PC-3 (cell line): ENCODE measurements at regions of chr18 and their contacts with region 1.

Region 1: GRCh38 chr18:54607215-54607934 is 16.3 kb downstream of the DYNAP start:
- DNase-seq: peak; percentile 87
- ATAC-seq: peak; percentile 65
- H3K4me3 ChIP-seq: peak overlapping the region; percentile 65
- H3K27ac ChIP-seq: peak overlapping the region; percentile 95
- H3K4me1 ChIP-seq: peaks cover 38% of the 10 kb centered on the region
- H3K27me3 ChIP-seq: no peaks in the 10 kb centered on the region
- CTCF ChIP-seq: no peak

Region 2: DNA sequence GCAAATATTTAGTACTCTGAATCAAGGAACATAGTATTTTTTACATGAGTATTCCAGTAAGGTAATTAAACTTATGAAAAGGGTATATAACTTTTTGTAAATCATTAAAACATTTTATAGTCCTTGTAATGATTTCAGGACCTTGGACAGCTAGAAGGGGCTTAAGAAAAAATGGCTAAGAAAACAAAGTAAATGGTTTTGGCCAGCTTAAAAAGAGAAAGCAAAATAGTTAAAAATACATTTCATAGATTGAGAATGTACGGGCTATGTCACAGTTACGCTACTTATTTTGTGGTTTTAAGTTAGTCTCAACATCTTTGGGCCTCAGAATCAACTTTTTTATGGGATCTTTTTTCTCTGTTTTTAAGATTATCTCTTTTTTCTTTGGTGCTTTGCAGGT is 311.3 kb before region 1 on chr18:
- CTCF ChIA-PET with region 1: no interaction called
- POLR2A ChIA-PET with region 1: interaction called, 10 read pairs
- intact Hi-C with region 1: no loop called
- DNase-seq: peak; percentile 7
- ATAC-seq: no peak
- H3K4me3 ChIP-seq: no peak overlapping the region
- H3K27ac ChIP-seq: no peak overlapping the region
- H3K4me1 ChIP-seq: no peaks in the 10 kb centered on the region
- H3K27me3 ChIP-seq: no peaks in the 10 kb centered on the region
- CTCF ChIP-seq: no peak

Region 3: DNA sequence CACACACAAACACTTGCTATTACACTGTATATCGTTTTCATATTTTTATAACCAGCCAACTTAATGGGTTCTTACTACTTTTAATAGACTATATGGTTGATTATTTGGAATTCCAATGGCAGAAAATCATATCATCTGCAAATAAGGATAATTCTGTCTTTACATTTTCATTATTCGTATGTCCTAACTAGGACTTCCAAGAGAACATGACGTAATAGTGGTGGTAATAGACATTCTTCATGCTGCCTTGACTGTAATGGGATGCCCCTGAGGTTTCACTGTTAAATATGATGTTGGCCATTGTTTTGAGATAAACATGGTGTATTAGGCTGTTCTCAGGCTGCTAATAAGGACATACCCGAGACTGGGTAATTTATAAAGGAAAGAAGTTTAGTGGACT is 28.8 kb after region 1 on chr18:
- CTCF ChIA-PET with region 1: no interaction called
- POLR2A ChIA-PET with region 1: no interaction called
- intact Hi-C with region 1: no loop called
- DNase-seq: no peak
- ATAC-seq: no peak
- H3K4me3 ChIP-seq: no peak overlapping the region
- H3K27ac ChIP-seq: no peak overlapping the region
- H3K4me1 ChIP-seq: no peaks in the 10 kb centered on the region
- H3K27me3 ChIP-seq: no peaks in the 10 kb centered on the region
- CTCF ChIP-seq: no peak

Region 4: DNA sequence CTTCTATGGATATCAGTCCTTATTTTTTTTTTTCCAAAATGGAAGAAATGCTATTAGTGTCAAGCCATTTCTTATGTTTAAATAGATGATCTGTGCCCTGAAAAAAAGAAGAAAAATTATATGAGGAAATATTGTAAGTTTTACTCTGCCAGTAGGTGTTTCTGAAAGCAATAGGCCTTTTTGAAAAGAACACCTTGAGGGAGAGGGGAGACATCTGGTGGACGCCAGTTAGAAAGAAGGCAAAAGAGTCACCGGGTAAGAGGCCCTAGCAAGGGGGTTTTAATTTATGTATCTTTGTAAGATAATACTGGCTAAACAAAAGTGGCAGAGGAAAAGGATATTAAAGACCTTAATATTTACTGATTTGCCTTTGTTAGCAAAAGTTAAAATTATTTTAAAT is 39.8 kb after region 1 on chr18:
- CTCF ChIA-PET with region 1: no interaction called
- POLR2A ChIA-PET with region 1: no interaction called
- intact Hi-C with region 1: loop called (anchors 5 kb)
- DNase-seq: peak; percentile 69
- ATAC-seq: peak; percentile 74
- H3K4me3 ChIP-seq: no peak overlapping the region
- H3K27ac ChIP-seq: no peak overlapping the region
- H3K4me1 ChIP-seq: no peaks in the 10 kb centered on the region
- H3K27me3 ChIP-seq: peaks cover 5% of the 10 kb centered on the region; the same call in 1 of the 2 replicates
- CTCF ChIP-seq: peak; percentile 77

Region 5: GRCh38 chr18:54766619-54767018 is 159.2 kb after region 1 on chr18:
- CTCF ChIA-PET with region 1: no interaction called
- POLR2A ChIA-PET with region 1: no interaction called
- intact Hi-C with region 1: loop called (anchors 2 kb)
- DNase-seq: peak; percentile 75
- ATAC-seq: peak; percentile 47
- H3K4me3 ChIP-seq: peak overlapping the region; percentile 54
- H3K27ac ChIP-seq: peak overlapping the region; percentile 99
- H3K4me1 ChIP-seq: peaks cover 56% of the 10 kb centered on the region
- H3K27me3 ChIP-seq: no peaks in the 10 kb centered on the region
- CTCF ChIP-seq: no peak

Region 6: DNA sequence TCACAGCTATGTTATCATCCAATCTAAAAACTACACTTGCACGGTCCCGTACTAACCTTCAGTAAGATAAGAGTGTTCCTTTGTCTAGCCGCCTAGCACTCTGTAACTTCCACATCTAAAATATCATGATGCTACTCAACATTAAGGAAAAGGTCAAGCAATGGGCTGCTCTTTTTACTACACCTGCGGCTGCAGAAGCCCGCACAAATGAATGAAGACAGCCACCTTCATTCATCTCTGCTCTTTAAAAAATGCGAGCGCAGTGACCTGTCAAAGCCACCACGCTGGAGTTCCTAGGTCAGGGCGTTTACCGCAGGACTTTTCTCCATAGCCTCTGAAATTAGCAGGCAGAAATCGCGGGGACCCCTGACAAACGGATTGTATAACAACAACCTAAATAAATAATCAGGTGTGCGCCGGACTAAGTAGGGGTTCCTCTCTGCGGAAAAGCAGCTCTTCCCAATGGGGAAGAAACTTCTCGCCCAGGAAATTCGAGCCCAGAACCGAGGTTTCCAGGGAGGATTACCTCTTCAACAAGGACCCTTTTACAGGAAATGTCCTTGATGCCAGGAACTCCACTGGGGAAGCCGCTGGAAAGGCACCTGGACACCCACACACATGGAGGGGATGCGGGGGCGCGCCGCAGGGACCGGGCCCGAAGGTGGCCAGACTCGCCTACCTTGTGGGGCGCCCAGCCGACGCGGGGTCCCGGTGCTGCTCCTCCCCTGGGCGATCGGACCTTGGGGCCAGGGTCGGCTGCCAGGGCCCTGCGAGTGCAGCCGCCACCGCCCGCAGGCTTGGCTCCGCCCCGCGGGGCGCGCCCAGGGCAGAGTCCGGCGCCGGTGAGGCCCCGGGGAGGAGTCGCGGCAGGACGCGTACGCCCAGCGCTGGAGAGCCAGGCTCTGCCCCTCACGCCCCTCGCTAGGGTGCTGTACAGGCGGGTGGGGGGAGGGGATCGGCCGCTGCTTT is 351.6 kb after region 1 on chr18 and contains the start of gene CCDC68:
- CTCF ChIA-PET with region 1: no interaction called
- POLR2A ChIA-PET with region 1: interaction called, 13 read pairs
- intact Hi-C with region 1: no loop called
- DNase-seq: peak; percentile 68
- ATAC-seq: peak; percentile 98
- H3K4me3 ChIP-seq: peak within 1 kb of the TSS; percentile 80
- H3K27ac ChIP-seq: no peak within 1 kb of the TSS
- H3K4me1 ChIP-seq: peaks cover 13% of the 10 kb centered on the region
- H3K27me3 ChIP-seq: no peaks in the 10 kb centered on the region
- CTCF ChIP-seq: no peak
- total RNA-seq, gene CCDC68: 2.6 and 3.1 TPM in 2 replicates